ENCODE measurements at regions of chr6 and their contacts with region 1.

Region 1: GRCh38 chr6:79525272-79526100 is 11.7 kb downstream of the LCA5 start:
- DNase-seq: peak in 3 of 4 experiments; percentile 13 to 88 (median 70)
- ATAC-seq: peak; percentile 96
- H3K4me3 ChIP-seq: no peak overlapping the region
- H3K27ac ChIP-seq: peak overlapping the region; percentile 52
- H3K4me1 ChIP-seq: peaks cover 5 to 12% of the 10 kb centered on the region in 2 experiments
- H3K27me3 ChIP-seq: no peaks in the 10 kb centered on the region
- CTCF ChIP-seq: no peak
- EP300 ChIP-seq: peak; percentile 62
- POLR2A ChIP-seq: no peak
- RAD21 ChIP-seq: no peak

Region 2: DNA sequence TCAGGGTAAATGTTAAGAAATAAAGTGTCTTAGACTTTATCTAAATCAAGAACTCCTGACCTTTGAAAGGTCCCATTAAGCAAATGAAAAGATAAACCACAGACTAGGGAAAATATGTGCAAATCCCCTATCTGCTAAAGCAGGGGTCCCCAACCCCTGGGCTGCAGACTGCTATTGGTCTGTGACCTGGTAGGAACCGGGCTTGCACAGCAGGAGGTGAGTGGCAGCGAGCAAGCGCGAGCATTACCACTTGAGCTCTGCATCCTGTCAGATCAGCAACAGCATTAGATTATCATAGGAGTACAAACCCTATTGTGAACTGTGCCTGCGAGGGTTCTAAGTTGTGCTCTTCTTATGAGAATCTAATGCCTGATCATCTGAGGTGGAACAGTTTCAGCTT is 30.6 kb before region 1 on chr6:
- CTCF ChIA-PET with region 1: no interaction called
- POLR2A ChIA-PET with region 1: no interaction called
- in situ Hi-C with region 1: no loop called
- intact Hi-C with region 1: no loop called
- DNase-seq: peak in 1 of 4 experiments; percentile 37
- ATAC-seq: peak; percentile 79
- H3K4me3 ChIP-seq: no peak overlapping the region
- H3K27ac ChIP-seq: no peak overlapping the region
- H3K4me1 ChIP-seq: peaks cover 0 to 3% of the 10 kb centered on the region in 2 experiments; a peak in 1 of 5 replicates
- H3K27me3 ChIP-seq: no peaks in the 10 kb centered on the region
- CTCF ChIP-seq: no peak
- EP300 ChIP-seq: no peak
- POLR2A ChIP-seq: no peak
- RAD21 ChIP-seq: no peak

Region 3: DNA sequence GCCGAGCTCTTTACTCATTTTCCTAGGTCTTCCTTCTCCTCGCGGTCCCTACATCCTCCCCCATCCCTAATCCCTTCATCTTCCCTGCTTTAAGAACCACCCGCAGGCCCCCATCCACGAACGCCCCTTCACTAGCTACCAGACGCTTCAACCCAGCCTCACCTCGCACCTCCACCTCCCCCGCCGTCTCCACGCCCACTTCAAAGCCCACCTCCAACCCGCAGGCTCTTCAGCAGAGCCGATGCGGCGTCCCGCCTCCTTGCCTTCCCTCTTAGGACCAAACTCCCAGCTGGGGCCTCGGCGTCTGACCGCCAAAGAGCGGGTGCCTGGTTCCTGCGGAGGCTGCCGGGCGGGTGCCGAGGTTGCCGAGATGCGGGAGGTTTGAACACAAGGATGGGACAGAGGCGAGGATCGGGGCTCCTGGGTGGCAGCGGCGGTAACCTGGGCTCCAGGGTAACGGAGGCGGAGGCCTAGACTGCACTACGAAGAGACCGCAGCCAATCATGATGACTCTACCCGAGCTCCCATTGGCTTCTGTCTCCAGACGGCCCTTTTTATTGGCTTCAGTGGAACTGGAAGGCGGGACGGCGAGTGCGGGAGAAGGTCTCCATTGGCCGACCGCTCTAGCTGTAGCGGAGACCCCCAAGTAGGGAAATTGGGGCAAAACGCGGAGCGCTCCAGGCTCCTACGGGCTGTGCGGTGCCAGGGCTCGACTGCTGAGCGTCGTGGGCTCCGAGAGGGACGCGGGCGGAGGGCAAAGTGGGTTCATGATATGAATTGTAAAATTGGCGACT is 11.7 kb after region 1 on chr6 and contains the start of gene LCA5:
- CTCF ChIA-PET with region 1: no interaction called
- POLR2A ChIA-PET with region 1: interaction called, 10 read pairs
- in situ Hi-C with region 1: no loop called
- intact Hi-C with region 1: no loop called
- DNase-seq: peak; percentile 88 to 97 (median 92)
- ATAC-seq: peak; percentile 95
- H3K4me3 ChIP-seq: peak within 1 kb of the TSS; percentile 82
- H3K27ac ChIP-seq: peak within 1 kb of the TSS; percentile 80
- H3K4me1 ChIP-seq: peaks cover 10% of the 10 kb centered on the region in 2 experiments; a peak in 4 of 5 replicates
- H3K27me3 ChIP-seq: no peaks in the 10 kb centered on the region
- CTCF ChIP-seq: no peak
- EP300 ChIP-seq: no peak
- POLR2A ChIP-seq: peak; percentile 88
- RAD21 ChIP-seq: no peak
- polyA plus RNA-seq, gene LCA5: 1.0 to 1.3 TPM

Region 4: GRCh38 chr6:79544939-79545450 is 19.5 kb after region 1 on chr6:
- CTCF ChIA-PET with region 1: no interaction called
- POLR2A ChIA-PET with region 1: no interaction called
- in situ Hi-C with region 1: no loop called
- intact Hi-C with region 1: loop called (anchors 2 kb)
- DNase-seq: peak; percentile 82 to 96 (median 86)
- ATAC-seq: peak; percentile 95
- H3K4me3 ChIP-seq: no peak overlapping the region
- H3K27ac ChIP-seq: peak overlapping the region; percentile 91
- H3K4me1 ChIP-seq: peaks cover 0 to 40% of the 10 kb centered on the region in 2 experiments; a peak in 3 of 5 replicates
- H3K27me3 ChIP-seq: no peaks in the 10 kb centered on the region
- CTCF ChIP-seq: peak; percentile 71 to 85 (median 74)
- EP300 ChIP-seq: peak; percentile 94
- POLR2A ChIP-seq: no peak
- RAD21 ChIP-seq: peak; percentile 62 to 66